ENCODE measurements at regions of chr1 and their contacts with region 1.

Region 1: GRCh38 chr1:44652445-44653106 is 21.7 kb downstream of the TMEM53 start:
- DNase-seq: peak; percentile 81
- H3K4me3 Mint-ChIP-seq: no peak overlapping the region
- H3K27ac Mint-ChIP-seq: peak overlapping the region; percentile 28
- H3K4me1 Mint-ChIP-seq: no peaks in the 10 kb centered on the region
- H3K27me3 Mint-ChIP-seq: no peaks in the 10 kb centered on the region

Region 2: DNA sequence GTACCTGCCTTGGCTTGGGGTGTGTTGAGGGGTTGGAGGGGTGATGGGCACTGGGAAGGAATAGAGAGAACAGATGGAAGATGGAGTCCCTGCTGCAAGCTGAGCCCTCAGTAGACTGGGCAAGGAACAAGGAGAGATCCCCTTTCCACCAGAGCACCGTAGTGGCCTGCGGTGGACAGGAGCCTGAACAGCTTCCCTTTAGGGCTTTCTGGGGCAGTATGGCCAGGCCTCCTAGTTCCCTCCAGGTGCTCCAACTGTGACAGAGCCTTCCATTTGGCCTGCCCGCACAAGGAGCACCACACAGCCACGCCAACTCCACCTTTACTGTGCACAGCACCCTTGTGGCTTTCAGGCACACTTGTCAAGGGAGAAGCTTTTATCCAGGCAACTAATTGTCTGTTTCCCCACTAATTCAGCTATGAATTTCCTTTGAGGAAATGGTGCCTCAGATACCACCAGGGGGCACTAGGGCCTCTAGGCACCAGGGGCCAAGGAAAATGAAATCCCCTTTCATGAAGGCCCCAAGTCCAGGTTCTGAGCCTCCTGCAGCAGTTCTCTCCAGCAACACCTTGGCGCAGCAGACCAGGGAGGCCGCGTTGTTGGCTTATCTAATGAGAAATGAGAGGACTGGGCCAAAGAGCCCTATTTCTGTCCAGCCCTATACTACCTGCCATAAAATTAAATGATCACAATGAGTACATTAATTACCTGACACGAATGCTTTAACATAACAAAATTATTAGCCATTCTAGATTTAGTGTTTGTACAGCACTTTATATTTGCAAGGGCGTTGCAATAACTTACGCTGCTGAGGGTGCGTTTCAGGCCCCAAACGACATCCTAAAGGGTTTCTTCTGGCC is 274.4 kb before region 1 on chr1:
- CTCF ChIA-PET with region 1: interaction called, 13 read pairs
- DNase-seq: peak; percentile 63
- H3K4me3 Mint-ChIP-seq: no peak overlapping the region
- H3K27ac Mint-ChIP-seq: no peak overlapping the region
- H3K4me1 Mint-ChIP-seq: no peaks in the 10 kb centered on the region
- H3K27me3 Mint-ChIP-seq: peaks cover 9% of the 10 kb centered on the region

Region 3: DNA sequence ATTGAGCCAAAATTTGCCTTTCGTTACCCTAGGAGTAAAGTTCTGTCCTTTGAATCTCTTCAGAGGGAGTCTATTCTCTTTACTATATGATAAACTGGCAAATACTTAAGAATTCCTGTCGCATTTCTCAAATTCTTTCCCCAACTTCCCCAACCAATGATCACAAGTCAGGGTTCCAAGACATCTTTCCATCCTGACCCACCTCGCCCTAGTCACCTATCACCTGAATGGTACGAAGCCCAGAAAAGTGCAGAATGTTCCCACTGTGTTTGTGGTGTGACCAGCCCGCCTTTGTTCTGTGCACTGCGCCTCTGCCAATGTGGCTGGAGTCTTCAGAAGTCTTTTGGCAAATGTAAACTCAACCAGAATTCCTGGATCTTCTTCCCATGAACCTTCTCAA is 115.0 kb before region 1 on chr1:
- CTCF ChIA-PET with region 1: no interaction called
- DNase-seq: no peak
- H3K4me3 Mint-ChIP-seq: no peak overlapping the region
- H3K27ac Mint-ChIP-seq: no peak overlapping the region
- H3K4me1 Mint-ChIP-seq: no peaks in the 10 kb centered on the region
- H3K27me3 Mint-ChIP-seq: peaks cover 19% of the 10 kb centered on the region

Region 4: DNA sequence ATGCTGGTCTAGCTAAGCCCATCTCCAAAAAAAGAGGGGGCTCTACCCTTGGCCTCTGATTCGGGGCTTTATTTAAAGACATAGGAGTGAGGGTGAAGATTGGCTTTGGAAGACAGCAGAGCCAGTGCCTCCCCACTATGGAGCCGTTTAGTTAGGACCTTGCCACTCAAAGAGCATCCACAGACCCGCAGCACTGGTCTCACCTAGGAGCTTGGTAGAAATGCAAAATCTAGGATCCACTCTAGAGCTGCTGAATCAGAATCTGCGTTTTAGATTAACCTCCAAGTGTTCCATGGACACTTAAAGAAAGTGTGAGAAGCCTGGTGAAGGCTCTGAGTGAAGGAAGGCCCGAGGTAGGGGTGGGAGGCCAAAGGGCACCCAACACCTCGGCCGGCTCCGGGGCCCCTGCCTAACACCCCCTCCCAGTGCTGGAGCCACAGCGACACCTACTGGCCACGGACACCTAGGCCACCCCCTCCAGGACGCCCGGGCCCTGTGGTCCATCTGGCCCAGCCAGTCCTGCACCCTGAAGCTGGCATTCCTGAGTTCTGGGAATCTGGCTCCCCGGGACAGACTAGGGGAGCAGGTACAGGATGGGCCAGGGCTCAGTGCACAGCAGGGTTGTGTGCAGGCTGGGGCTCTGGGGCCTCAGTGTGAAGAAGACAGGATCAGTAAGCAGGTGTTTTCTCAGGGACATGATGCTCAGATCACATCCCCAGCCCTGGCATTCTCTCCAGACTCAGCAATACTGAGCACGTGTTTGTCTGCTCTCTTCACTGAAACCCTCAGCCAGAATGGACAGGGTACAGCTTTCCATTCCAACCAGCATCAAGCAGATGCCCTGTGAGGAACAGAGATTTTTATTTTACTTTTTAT is 57.5 kb before region 1 on chr1:
- CTCF ChIA-PET with region 1: interaction called, 11 read pairs
- DNase-seq: peak; percentile 84
- H3K4me3 Mint-ChIP-seq: no peak overlapping the region
- H3K27ac Mint-ChIP-seq: no peak overlapping the region
- H3K4me1 Mint-ChIP-seq: no peaks in the 10 kb centered on the region
- H3K27me3 Mint-ChIP-seq: peaks cover 16% of the 10 kb centered on the region

Region 5: DNA sequence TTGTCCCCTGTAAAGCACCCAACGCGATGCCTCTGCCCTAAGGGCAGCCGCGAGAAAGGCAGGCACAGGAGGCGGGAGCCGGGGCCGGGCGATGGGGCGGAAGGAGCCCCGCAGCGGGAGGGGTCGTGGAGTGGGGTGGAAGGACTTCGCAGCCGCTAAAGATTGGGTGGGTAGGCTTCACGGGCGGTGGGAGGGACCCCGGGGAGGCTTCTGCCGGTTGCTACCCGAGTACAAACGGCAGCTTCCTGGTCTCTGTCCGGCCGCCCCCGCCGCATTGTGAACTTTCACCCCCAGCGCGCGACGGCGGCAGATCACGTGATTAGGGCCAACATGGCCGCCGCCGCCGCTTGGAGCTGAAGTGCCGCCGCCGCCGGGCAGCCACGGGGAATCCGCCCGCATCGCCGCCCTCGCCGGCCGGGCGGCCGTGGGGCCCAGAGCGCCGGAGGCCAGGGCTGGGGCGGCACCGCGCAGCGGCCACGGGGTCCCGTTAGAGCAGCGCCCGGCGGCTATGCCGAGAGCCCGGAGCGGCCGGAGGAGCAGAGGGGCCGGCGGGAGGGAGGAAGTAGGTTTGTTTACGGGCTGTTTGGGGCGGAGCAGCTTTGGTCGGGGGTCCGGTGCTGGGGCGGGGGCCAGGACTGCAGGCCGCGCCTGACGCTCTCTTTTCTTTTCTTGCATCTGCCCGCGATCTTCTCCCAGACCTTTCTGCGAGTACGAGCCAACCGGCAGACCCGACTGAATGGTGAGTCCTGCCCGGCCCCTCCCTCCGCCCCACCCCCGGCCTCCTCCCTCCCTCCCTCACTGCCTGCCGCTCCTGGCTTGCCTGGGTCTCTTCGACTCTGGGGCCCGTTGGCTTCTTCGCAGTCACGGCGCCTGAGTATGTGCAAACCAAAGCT is 20.7 kb before region 1 on chr1:
- CTCF ChIA-PET with region 1: interaction called, 25 read pairs
- DNase-seq: peak; percentile 94
- H3K4me3 Mint-ChIP-seq: peak overlapping the region; percentile 84
- H3K27ac Mint-ChIP-seq: peak overlapping the region; percentile 97
- H3K4me1 Mint-ChIP-seq: peaks cover 41% of the 10 kb centered on the region
- H3K27me3 Mint-ChIP-seq: no peaks in the 10 kb centered on the region

Region 6: DNA sequence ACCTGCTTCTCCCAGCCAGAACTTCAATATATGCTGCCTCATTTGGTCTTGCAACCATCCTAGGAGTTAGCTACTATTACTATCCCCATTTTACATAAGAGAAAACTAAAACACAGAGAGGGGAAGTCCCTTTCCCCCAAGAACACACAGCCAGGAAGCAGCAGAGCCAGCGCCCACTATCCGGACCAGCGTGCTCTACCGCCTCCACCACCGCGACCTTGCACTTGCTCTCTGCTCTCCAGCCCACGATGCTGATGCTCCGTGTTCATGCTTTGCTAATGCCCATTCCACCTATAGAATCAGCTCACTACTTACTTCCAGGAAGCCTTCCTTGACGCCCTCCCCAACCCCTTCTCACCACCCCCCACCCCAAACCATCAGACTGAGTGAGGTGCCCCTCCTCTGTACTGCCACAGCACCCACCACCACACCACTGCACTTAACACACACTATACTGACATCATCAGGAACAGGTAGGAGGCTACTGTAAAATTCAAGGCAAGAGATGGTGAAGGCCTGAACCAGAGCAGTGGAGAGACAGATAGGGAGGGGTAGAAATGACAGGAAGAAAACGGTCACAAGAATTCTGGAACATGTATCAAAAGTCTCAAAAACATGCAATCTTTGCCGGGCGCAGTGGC is 12.3 kb after region 1 on chr1:
- CTCF ChIA-PET with region 1: interaction called, 40 read pairs
- DNase-seq: no peak
- H3K4me3 Mint-ChIP-seq: no peak overlapping the region
- H3K27ac Mint-ChIP-seq: peak overlapping the region; percentile 6
- H3K4me1 Mint-ChIP-seq: peaks cover 8% of the 10 kb centered on the region
- H3K27me3 Mint-ChIP-seq: no peaks in the 10 kb centered on the region

Region 7: GRCh38 chr1:44799770-44800584 is 147.4 kb after region 1 on chr1 and contains the start of gene PLK3:
- CTCF ChIA-PET with region 1: no interaction called
- DNase-seq: peak; percentile 99
- H3K4me3 Mint-ChIP-seq: peak within 1 kb of the TSS; percentile 86
- H3K27ac Mint-ChIP-seq: peak within 1 kb of the TSS; percentile 99
- H3K4me1 Mint-ChIP-seq: peaks cover 48% of the 10 kb centered on the region
- H3K27me3 Mint-ChIP-seq: no peaks in the 10 kb centered on the region

Measured in activated naive CD4-positive, alpha-beta T cell treated with anti-CD3 and anti-CD28 coated beads, Interleukin-2, amount 10 ng/mL, durations not matched to agents 7 days and 5 days (primary cell).